T-cell (primary cell): ENCODE measurements at regions of chr12 and their contacts with region 1.

Region 1: DNA sequence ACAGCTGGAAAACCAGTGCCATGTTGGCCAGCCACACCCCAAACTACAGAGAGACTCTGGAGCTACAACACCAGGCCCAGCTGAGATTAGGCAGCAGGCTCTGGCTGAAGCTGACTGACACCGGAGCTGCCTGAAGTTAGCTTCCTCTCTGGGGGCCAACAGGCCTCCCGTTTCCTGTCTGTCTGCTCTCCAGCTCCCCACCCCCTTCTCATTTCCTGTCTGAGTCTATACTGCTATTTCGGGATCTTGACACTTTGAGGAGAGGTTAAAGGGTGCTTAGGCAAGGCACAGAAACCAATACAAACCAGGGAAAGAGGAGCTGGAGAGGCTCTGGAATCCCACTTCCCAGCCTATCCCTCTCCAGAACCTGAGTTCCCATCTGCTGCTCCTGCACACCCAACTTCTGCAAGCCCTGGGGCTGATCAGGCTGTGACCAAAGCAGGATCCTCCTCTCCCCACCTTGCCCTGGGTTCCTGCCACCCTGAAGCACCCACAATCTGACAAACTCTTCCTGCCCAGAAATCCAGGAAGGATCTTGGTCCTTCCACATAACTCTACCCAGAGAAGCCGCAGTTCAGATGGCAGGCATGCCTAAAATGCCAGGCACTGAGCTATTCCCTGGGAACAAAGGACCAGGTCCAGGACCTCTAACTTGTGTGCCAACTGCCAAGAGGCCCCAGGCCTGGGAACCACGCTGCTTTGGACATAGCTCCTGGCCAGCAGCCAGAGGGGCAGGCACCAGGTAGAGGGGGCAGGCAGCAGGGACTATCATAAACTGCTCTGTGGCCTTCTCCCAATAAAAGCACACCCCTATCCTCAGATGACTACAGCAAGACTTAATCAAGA is 39.9 kb downstream of the PRPF40B start:
- DNase-seq: peak; percentile 50 to 87 (median 72)
- ATAC-seq: peak; percentile 96 to 99 (median 99)
- H3K4me3 ChIP-seq: peak overlapping the region; percentile 23 to 42
- H3K4me3 Mint-ChIP-seq: peak overlapping the region; percentile 69 to 74 (median 73)
- H3K27ac ChIP-seq: peak overlapping the region; percentile 78
- H3K27ac Mint-ChIP-seq: peak overlapping the region; percentile 98 to 99
- H3K4me1 ChIP-seq: peaks cover 57 to 66% of the 10 kb centered on the region in 2 experiments
- H3K4me1 Mint-ChIP-seq: peaks cover 84 to 96% (median 85%) of the 10 kb centered on the region in 3 donors
- H3K27me3 ChIP-seq: no peaks in the 10 kb centered on the region
- H3K27me3 Mint-ChIP-seq: no peaks in the 10 kb centered on the region

Region 2: GRCh38 chr12:49673446-49674317 is 10.5 kb after region 1 on chr12:
- CTCF ChIA-PET with region 1: interaction called in 1 of 2 experiments, 19 read pairs
- POLR2A ChIA-PET with region 1: interaction called, 3 to 12 read pairs
- DNase-seq: peak in 5 of 35 experiments; percentile 10 to 36 (median 27)
- ATAC-seq: peak in 2 of 4 experiments; percentile 29 to 33
- H3K4me3 ChIP-seq: peak overlapping the region in 1 of 2 donors; percentile 5
- H3K4me3 Mint-ChIP-seq: peak overlapping the region; percentile 25 to 65 (median 49)
- H3K27ac ChIP-seq: peak overlapping the region; percentile 91
- H3K27ac Mint-ChIP-seq: peak overlapping the region; percentile 97 to 98
- H3K4me1 ChIP-seq: peaks cover 64 to 69% of the 10 kb centered on the region in 2 experiments
- H3K4me1 Mint-ChIP-seq: peaks cover 85 to 88% (median 87%) of the 10 kb centered on the region in 3 donors
- H3K27me3 ChIP-seq: no peaks in the 10 kb centered on the region
- H3K27me3 Mint-ChIP-seq: no peaks in the 10 kb centered on the region